ENCODE measurements at regions of chr1 and their contacts with region 1.

Region 1: DNA sequence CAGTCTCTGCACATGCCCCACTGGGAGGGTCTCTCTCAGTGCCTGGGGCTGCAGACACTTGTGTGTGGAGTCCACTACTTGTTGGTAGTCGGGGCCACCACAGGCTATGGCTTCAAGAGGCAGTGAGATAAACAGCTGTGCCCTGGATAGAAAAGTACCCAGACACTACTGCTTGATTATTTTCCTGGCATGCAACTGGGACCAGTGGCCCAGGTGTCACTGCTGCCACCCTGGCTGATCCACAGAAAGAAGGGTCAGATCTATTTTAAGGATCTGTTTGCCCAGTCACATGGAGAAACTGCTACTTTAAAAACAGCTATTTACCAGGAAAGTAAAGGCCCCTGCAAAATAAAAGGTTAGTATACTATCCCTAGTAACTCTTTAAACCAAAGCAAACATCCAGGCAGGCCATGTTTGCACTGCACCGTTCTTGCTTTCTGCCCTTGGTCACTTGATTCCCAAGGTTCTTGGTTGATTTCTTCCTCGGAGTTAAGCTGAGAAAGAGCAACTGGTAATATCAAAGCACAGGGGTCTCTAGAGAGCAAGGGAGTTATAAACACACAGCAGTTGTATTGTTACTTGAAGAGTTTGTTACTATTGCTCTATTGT is 99.9 kb downstream of the GLUL start:
- DNase-seq: no peak
- H3K4me3 ChIP-seq: no peak overlapping the region
- H3K27ac ChIP-seq: peak overlapping the region; percentile 71 to 86 (median 82)
- H3K4me1 ChIP-seq: peaks cover 15 to 49% (median 35%) of the 10 kb centered on the region in 4 donors
- H3K27me3 ChIP-seq: no peaks in the 10 kb centered on the region
- CTCF ChIP-seq: no peak
- EP300 ChIP-seq: no peak
- POLR2A ChIP-seq: no peak

Region 2: GRCh38 chr1:182149411-182149965 is 142.2 kb before region 1 on chr1:
- intact Hi-C with region 1: loop called (anchors 5 kb)
- DNase-seq: no peak
- H3K4me3 ChIP-seq: no peak overlapping the region
- H3K27ac ChIP-seq: peak overlapping the region; percentile 7 to 45 (median 30)
- H3K4me1 ChIP-seq: peaks cover 13 to 37% (median 20%) of the 10 kb centered on the region in 4 donors
- H3K27me3 ChIP-seq: no peaks in the 10 kb centered on the region
- CTCF ChIP-seq: no peak
- EP300 ChIP-seq: peak; percentile 20
- POLR2A ChIP-seq: peak; percentile 16

Region 3: DNA sequence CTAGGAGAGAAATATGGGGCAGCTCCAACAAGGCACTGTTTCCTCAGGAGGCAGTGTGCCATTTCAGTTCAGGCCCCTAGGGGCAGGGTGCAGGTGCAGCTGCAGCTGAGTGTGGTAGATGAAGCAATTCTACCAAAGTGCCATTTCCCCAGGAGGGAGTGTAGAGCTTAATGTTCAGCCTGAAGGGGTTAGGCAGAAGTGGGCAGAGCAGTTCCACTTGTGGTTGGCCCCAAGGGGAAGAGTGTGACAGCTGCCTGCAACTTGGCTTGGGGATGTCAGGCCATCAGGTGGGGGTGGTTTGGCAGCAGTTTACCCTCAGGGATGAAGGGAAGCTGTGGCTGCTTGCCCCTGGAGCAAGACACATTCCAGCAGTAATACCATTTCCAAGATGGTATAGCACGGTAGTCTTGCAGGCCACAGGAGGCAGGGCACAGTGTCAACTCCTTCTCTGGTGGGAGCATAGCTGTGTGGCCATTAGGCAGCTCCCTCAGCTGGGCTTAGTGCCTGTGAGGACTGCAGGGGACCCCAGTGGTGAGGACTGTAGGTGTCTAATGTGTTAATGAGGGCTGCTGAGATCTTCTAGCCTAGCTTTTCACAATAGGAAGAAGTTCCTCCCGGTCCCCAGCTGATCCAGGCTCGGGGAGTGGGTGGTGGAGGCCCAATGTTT is 193.0 kb after region 1 on chr1:
- intact Hi-C with region 1: no loop called
- DNase-seq: no peak
- H3K4me3 ChIP-seq: no peak overlapping the region
- H3K27ac ChIP-seq: no peak overlapping the region
- H3K4me1 ChIP-seq: no peaks in the 10 kb centered on the region
- H3K27me3 ChIP-seq: no peaks in the 10 kb centered on the region
- CTCF ChIP-seq: peak in 1 of 3 experiments; percentile 17
- EP300 ChIP-seq: no peak
- POLR2A ChIP-seq: no peak

Measured in esophagus muscularis mucosa (tissue), 4 donors.